ENCODE measurements at regions of chr12 and their contacts with region 1.

Region 1: DNA sequence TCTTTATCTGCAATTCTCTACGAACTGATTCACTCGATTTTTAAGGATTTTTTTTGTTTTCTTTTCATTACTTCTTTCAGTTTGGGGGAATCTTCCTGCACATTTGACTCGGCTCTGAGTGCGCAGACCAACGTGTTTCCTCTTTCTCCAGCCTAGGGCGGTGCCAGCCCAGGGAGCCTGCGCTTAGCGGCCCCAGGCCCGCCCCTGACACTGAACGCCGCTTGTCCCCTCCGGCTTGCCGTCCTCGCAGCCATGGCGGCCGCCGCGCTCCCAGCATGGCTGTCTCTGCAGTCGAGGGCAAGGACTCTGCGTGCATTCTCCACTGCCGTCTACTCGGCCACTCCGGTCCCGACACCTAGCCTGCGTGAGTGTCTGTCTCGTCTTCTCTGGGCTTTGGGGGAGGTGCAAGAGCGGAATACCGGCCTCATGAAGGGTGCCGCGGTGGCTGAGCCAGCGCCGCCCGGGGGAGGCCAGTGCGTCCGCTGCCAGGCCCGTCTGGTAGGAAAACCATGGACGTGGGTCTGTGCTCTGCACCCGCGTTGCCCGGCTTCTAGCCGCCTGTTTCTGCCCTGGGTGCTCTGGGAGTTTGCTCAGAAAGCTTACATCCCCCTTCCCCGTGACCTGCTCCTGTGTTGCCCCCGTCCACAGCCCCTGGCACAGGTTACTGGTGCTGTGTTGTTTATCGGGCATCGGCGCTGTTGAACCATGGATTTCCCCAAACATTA is at the start of gene MRPS35:
- DNase-seq: peak; percentile 94
- ATAC-seq: peak; percentile 98
- H3K4me3 ChIP-seq: peak within 1 kb of the TSS; percentile 74
- H3K27ac ChIP-seq: peak within 1 kb of the TSS; percentile 93
- H3K4me1 ChIP-seq: peaks cover 2% of the 10 kb centered on the region; the same call in 1 of the 2 replicates
- H3K27me3 ChIP-seq: no peaks in the 10 kb centered on the region
- CTCF ChIP-seq: no peak
- POLR2A ChIP-seq: peak; percentile 79
- RAD21 ChIP-seq: no peak
- total RNA-seq, gene MRPS35: 27.4 and 46.9 TPM in 2 replicates

Region 2: DNA sequence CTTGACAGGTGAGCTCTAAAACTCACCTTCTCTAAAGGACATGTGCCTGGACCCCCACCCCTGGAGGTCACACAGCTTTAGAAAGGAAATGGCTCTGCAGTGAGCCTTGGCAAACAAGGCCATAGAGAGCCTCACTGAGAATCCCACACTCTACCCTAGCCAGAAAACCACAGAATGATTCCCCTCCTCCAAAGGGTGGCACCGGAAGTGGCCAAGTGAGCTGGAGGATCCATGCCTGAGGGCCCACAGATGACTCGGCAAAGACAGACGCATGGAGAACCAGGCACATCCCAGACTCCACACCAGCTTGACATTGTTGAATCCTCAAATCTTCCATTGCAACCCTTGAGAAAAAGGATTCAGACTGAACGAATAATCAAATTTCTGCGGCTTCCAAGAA is 315.9 kb after region 1 on chr12:
- CTCF ChIA-PET with region 1: no interaction called
- POLR2A ChIA-PET with region 1: interaction called, 12 read pairs
- dilution Hi-C with region 1: no loop called
- in situ Hi-C with region 1: no loop called
- intact Hi-C with region 1: no loop called
- DNase-seq: no peak
- ATAC-seq: no peak
- H3K4me3 ChIP-seq: no peak overlapping the region
- H3K27ac ChIP-seq: no peak overlapping the region
- H3K4me1 ChIP-seq: peaks cover 8% of the 10 kb centered on the region
- H3K27me3 ChIP-seq: no peaks in the 10 kb centered on the region
- CTCF ChIP-seq: no peak
- POLR2A ChIP-seq: no peak
- RAD21 ChIP-seq: no peak